PC-9 (cell line): ENCODE measurements at regions of chr3 and their contacts with region 1.

Region 1: GRCh38 chr3:52570076-52570475 is 33.7 kb downstream of the UQCC5 start:
- DNase-seq: peak in 1 of 2 experiments; percentile 39
- H3K4me3 ChIP-seq: no peak overlapping the region
- H3K27ac ChIP-seq: no peak overlapping the region
- H3K4me1 ChIP-seq: peaks cover 10% of the 10 kb centered on the region; the same call in 1 of the 2 replicates
- H3K27me3 ChIP-seq: no peaks in the 10 kb centered on the region
- CTCF ChIP-seq: no peak

Region 2: GRCh38 chr3:51982782-51983577 is 587.1 kb before region 1 on chr3 and contains the start of gene ACY1:
- CTCF ChIA-PET with region 1: no interaction called
- POLR2A ChIA-PET with region 1: interaction called, 18 read pairs
- intact Hi-C with region 1: no loop called
- DNase-seq: peak; percentile 82 to 95
- H3K4me3 ChIP-seq: peak within 1 kb of the TSS; percentile 67
- H3K27ac ChIP-seq: peak within 1 kb of the TSS; percentile 89
- H3K4me1 ChIP-seq: peaks cover 29% of the 10 kb centered on the region
- H3K27me3 ChIP-seq: no peaks in the 10 kb centered on the region
- CTCF ChIP-seq: peak; percentile 53
- total RNA-seq, gene ACY1: 52.2 and 63.3 TPM in 2 replicates

Region 3: DNA sequence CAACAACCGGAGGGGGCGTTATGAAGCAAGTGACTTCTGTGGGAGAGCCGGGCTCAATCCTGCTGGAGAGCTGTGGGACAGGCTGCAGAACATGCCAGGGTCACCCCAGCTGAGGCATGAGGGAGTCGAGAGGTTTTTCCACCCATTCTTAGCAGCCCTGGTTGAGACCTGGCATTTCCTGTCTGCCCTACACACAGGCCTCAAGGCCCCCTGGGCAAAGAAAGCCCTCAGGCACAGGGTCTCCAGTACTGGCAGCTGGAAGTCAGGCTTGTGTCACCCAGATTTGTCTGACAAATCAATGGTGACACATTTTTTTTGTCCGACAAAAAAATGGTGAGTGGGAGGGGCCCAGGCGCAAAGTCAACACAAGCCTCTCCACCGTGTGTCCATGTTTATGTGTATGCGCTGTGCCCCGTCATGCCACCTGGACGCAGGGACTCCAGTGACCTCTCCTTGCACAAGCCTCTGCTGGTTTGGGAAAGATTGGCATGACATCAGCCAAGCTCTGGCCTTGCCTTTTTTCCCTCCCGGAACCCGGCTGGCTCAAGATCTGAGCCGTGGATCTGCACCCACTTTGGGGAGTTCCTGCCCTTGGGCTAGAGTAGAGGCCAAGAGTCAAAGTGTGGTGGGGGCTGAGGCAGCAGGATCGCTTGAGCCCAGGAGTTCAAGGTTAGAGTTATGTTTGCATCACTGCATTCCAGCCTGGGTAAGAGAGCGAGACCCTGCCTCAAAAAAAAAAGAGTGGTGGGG is 392.9 kb before region 1 on chr3:
- CTCF ChIA-PET with region 1: no interaction called
- POLR2A ChIA-PET with region 1: interaction called, 10 read pairs
- intact Hi-C with region 1: no loop called
- DNase-seq: peak in 1 of 2 experiments; percentile 73
- H3K4me3 ChIP-seq: no peak overlapping the region
- H3K27ac ChIP-seq: no peak overlapping the region
- H3K4me1 ChIP-seq: peaks cover 18% of the 10 kb centered on the region
- H3K27me3 ChIP-seq: no peaks in the 10 kb centered on the region
- CTCF ChIP-seq: no peak

Region 4: GRCh38 chr3:52536369-52537164 is 33.5 kb before region 1 on chr3 and contains the start of gene UQCC5:
- CTCF ChIA-PET with region 1: no interaction called
- POLR2A ChIA-PET with region 1: interaction called, 11 read pairs
- intact Hi-C with region 1: no loop called
- DNase-seq: peak; percentile 94 to 98
- H3K4me3 ChIP-seq: peak within 1 kb of the TSS; percentile 99
- H3K27ac ChIP-seq: peak within 1 kb of the TSS; percentile 71
- H3K4me1 ChIP-seq: peaks cover 28% of the 10 kb centered on the region
- H3K27me3 ChIP-seq: no peaks in the 10 kb centered on the region
- CTCF ChIP-seq: no peak
- total RNA-seq, gene UQCC5: 13.3 and 16.5 TPM in 2 replicates

Region 5: GRCh38 chr3:52606373-52607085 is 36.5 kb after region 1 on chr3:
- CTCF ChIA-PET with region 1: no interaction called
- POLR2A ChIA-PET with region 1: no interaction called
- intact Hi-C with region 1: loop called (anchors 5 kb)
- DNase-seq: peak; percentile 72 to 91
- H3K4me3 ChIP-seq: no peak overlapping the region
- H3K27ac ChIP-seq: peak overlapping the region; percentile 67
- H3K4me1 ChIP-seq: peaks cover 19% of the 10 kb centered on the region
- H3K27me3 ChIP-seq: no peaks in the 10 kb centered on the region
- CTCF ChIP-seq: no peak

Region 6: GRCh38 chr3:52696830-52697621 is 127.0 kb after region 1 on chr3:
- CTCF ChIA-PET with region 1: no interaction called
- POLR2A ChIA-PET with region 1: no interaction called
- intact Hi-C with region 1: no loop called
- DNase-seq: no peak
- H3K4me3 ChIP-seq: no peak overlapping the region
- H3K27ac ChIP-seq: no peak overlapping the region
- H3K4me1 ChIP-seq: no peaks in the 10 kb centered on the region
- H3K27me3 ChIP-seq: no peaks in the 10 kb centered on the region
- CTCF ChIP-seq: no peak

Region 7: DNA sequence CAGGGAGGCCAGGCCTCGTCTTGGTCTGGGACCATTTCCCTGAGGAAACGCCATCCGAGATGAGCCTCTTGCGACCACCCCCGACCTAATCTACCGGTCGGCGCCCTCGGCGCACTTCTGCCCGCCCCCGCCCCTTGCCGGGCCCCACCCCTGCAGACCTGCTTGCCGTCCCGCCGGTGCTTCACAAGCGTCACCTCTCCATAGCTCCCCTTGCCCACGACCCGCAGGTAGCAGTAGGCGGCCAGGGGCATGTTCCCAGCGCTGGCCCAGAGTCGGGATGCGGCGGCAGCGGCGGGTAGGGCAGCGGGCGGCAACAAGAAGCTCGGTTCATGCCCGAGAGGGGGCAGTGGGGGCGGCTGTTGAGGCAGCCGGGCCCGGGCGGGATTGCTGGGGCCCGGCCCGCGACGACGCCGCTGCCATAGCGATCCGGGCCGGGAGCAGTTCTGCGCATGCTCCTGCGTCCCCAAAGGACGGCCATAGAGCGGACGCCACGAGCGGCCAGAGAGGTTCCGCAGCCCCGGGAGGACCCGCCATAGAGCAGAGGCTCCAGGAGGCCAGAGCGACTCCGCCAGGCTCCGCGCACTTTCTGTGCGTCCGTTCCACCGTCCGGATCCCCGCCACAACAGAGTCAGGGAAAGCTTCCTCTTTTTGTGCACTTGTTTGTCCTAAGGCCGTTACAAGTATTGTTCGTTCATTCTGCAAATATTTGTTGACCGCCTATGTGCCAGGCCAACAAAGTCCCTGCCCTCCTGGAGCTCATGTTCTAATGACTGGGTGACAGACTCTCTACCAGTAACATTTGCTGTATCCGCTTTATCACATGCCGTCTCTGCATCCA is 200.6 kb after region 1 on chr3 and contains the start of gene NEK4:
- CTCF ChIA-PET with region 1: interaction called, 10 read pairs
- POLR2A ChIA-PET with region 1: no interaction called
- intact Hi-C with region 1: no loop called
- DNase-seq: peak; percentile 73 to 90
- H3K4me3 ChIP-seq: peak within 1 kb of the TSS; percentile 94
- H3K27ac ChIP-seq: peak within 1 kb of the TSS; percentile 53; the same call in 1 of the 2 replicates
- H3K4me1 ChIP-seq: 0 out of 2 replicates have a peak, but pooled peaks cover 9% of the 10 kb centered on the region
- H3K27me3 ChIP-seq: no peaks in the 10 kb centered on the region
- CTCF ChIP-seq: no peak
- total RNA-seq, gene NEK4: 26.3 and 36.5 TPM in 2 replicates